ENCODE measurements at regions of chr4 and their contacts with region 1.

Region 1: DNA sequence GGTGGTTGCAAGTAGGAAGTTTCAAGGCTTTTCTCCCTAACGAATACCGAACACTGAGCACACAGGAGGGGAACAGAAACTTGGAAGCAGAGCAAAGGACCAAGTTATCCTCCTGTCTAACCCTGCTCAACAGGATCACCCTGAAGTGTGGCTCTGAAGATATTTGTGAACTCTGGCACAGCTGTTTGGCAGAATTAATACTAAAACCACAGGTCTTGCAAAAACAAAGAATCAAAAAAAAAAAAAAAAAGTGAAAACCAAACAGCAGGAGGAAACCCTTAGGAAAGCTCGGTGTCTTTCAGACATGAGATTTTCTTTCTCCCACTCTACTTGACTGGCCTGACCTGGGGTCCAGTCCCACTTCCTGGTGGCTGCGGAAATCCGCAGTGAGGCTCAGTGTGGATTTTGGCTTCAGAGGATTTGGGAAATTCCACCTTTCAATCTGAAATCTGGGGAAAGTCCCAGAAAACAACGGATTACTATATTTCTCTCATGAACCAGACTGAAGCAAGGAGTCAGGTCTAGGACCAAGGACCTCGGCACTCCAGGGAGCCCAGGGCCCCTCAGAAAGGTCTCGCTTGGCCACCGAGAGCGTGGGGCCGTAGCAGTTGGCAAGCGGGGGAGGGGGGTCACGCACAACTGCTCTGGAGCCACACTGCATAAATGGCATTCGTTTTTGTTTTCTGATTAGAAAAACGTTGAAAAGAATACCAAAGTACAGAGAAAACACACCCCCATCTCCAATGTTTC is 867 bp downstream of the TIFA start:
- DNase-seq: peak; percentile 69
- H3K4me3 ChIP-seq: peak overlapping the region; percentile 77 to 98 (median 92)
- H3K27ac ChIP-seq: peak overlapping the region; percentile 61
- H3K4me1 ChIP-seq: peaks cover 16% of the 10 kb centered on the region
- H3K27me3 ChIP-seq: no peaks in the 10 kb centered on the region
- CTCF ChIP-seq: no peak
- POLR2A ChIP-seq: no peak

Region 2: GRCh38 chr4:111930659-111931058 is 354.2 kb before region 1 on chr4:
- CTCF ChIA-PET with region 1: no interaction called
- POLR2A ChIA-PET with region 1: no interaction called
- dilution Hi-C with region 1: no loop called
- intact Hi-C with region 1: no loop called
- DNase-seq: no peak
- H3K4me3 ChIP-seq: no peak overlapping the region
- H3K27ac ChIP-seq: no peak overlapping the region
- H3K4me1 ChIP-seq: no peaks in the 10 kb centered on the region
- H3K27me3 ChIP-seq: peaks cover 7 to 20% of the 10 kb centered on the region in 2 experiments
- CTCF ChIP-seq: no peak
- POLR2A ChIP-seq: no peak

Region 3: GRCh38 chr4:112266821-112267220 is 18.0 kb before region 1 on chr4:
- CTCF ChIA-PET with region 1: interaction called, 13 read pairs
- POLR2A ChIA-PET with region 1: no interaction called
- dilution Hi-C with region 1: no loop called
- intact Hi-C with region 1: loop called (anchors 2 kb)
- DNase-seq: peak; percentile 50
- H3K4me3 ChIP-seq: no peak overlapping the region
- H3K27ac ChIP-seq: no peak overlapping the region
- H3K4me1 ChIP-seq: no peaks in the 10 kb centered on the region
- H3K27me3 ChIP-seq: no peaks in the 10 kb centered on the region
- CTCF ChIP-seq: peak; percentile 17 to 25
- POLR2A ChIP-seq: no peak

Region 4: DNA sequence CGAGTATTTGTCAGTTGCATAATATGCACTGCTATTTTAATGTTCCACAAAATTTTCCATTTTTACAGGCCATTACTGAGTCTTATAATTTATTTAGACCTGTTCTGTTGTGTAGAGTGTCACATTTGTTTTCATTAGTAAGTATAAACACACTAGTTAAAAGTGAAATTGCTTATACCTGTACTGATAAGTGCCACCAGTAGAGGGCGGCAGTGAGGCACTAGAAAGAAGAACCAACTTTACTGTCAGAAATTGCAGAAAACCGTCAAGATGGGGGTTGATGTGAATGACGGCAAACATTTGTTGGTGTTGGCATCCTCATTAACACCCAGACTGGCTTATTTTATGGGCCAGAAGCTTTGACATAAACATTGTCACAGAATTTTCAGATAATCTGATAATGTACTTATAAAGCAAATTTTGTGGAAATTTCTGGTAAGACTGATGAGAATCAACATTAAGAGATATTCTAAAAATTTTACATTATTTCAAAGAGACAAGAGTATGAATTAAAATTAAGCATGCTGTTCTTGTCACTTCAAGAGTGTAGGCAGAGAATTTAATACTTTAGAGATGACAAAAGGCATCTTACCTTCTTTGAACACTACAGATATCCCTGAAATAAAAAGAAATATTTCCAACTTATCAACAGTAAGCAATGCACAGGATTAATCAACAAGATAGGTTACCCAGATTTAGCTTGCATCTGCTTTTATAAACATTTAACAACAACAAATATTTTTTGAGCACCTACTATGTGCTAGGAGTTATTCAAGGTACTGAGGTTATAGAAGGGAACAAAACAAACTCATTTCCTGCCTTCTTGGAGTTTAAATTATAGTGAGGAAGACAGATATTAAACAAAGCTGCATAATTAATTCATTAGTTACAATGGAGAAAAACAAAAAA is 37.2 kb after region 1 on chr4:
- CTCF ChIA-PET with region 1: no interaction called
- POLR2A ChIA-PET with region 1: no interaction called
- dilution Hi-C with region 1: no loop called
- intact Hi-C with region 1: loop called (anchors 2 kb)
- DNase-seq: peak; percentile 81
- H3K4me3 ChIP-seq: no peak overlapping the region
- H3K27ac ChIP-seq: no peak overlapping the region
- H3K4me1 ChIP-seq: peaks cover 4% of the 10 kb centered on the region
- H3K27me3 ChIP-seq: no peaks in the 10 kb centered on the region
- CTCF ChIP-seq: peak; percentile 71 to 86
- POLR2A ChIP-seq: no peak

Region 5: GRCh38 chr4:112343330-112344080 is 58.7 kb after region 1 on chr4:
- CTCF ChIA-PET with region 1: no interaction called
- POLR2A ChIA-PET with region 1: no interaction called
- dilution Hi-C with region 1: no loop called
- intact Hi-C with region 1: no loop called
- DNase-seq: no peak
- H3K4me3 ChIP-seq: no peak overlapping the region
- H3K27ac ChIP-seq: no peak overlapping the region
- H3K4me1 ChIP-seq: no peaks in the 10 kb centered on the region
- H3K27me3 ChIP-seq: no peaks in the 10 kb centered on the region
- CTCF ChIP-seq: no peak
- POLR2A ChIP-seq: no peak